Activated CD8-positive, alpha-beta T cell treated with anti-CD3 and anti-CD28 coated beads for 36 hours (primary cell): ENCODE measurements at regions of chr2 and their contacts with region 1.

Region 1: GRCh38 chr2:53767405-53768241 is at the start of gene CHAC2:
- DNase-seq: peak; percentile 94
- ATAC-seq: peak; percentile 95
- H3K4me3 Mint-ChIP-seq: peak within 1 kb of the TSS; percentile 96
- H3K27ac Mint-ChIP-seq: peak within 1 kb of the TSS; percentile 97
- H3K4me1 Mint-ChIP-seq: peaks cover 31% of the 10 kb centered on the region
- H3K27me3 Mint-ChIP-seq: no peaks in the 10 kb centered on the region
- CTCF ChIP-seq: peak; percentile 26
- total RNA-seq, gene CHAC2: 19.8 to 20.4 TPM

Region 2: DNA sequence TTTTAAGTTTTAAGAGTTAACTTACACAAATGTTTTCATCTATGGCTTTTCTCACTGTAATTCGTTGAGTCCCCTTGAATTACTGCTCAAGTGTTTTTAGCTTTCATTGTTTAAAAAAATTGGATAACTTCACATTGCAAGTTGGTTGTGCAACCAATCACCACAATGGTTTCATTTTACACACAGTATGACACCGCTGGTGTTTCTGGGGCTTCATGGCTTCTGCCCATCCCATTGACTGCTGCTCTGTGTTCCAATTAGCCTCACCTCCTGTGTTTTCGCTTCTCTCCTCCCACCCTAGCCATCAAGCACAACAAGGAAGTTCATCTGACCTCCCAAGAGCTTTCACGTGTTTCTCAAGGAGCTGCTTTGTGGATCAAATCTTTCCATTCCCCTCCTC is 199.2 kb before region 1 on chr2:
- CTCF ChIA-PET with region 1: no interaction called
- POLR2A ChIA-PET with region 1: no interaction called
- intact Hi-C with region 1: no loop called
- DNase-seq: no peak
- ATAC-seq: no peak
- H3K4me3 Mint-ChIP-seq: no peak overlapping the region
- H3K27ac Mint-ChIP-seq: no peak overlapping the region
- H3K4me1 Mint-ChIP-seq: no peaks in the 10 kb centered on the region
- H3K27me3 Mint-ChIP-seq: peaks cover 3% of the 10 kb centered on the region
- CTCF ChIP-seq: no peak

Region 3: GRCh38 chr2:53755026-53755630 is 12.5 kb before region 1 on chr2:
- CTCF ChIA-PET with region 1: interaction called, 4 read pairs
- POLR2A ChIA-PET with region 1: interaction called, 15 read pairs
- intact Hi-C with region 1: no loop called
- DNase-seq: no peak
- ATAC-seq: no peak
- H3K4me3 Mint-ChIP-seq: no peak overlapping the region
- H3K27ac Mint-ChIP-seq: no peak overlapping the region
- H3K4me1 Mint-ChIP-seq: peaks cover 25% of the 10 kb centered on the region
- H3K27me3 Mint-ChIP-seq: no peaks in the 10 kb centered on the region
- CTCF ChIP-seq: no peak

Region 4: DNA sequence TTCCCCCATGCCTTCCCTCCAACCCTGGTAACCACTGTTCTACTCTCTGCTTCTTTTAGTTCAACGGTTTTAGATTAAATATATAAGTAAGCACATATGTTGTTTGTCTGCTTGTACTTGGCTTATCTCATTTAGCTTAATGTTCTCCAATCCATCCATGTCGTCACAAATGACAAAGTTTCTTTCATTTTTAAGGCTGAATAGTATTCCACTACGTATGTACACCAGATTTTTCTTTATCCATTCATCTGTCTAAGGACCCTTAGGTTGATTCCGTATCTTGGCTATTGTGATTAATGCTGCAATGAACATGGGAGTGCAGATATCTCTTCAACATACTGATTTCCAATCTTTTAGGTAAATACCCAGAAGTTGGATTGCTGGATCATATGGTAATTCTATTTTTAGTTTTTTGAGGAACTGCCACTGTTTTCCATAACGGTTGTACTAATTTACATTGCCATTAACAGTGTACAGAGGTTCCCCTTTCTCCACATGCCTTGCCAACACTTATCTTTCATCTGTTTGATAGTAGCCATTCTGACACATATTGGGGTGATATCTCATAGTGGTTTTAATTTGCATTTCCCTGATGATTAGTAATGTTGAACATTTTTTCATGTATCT is 11.0 kb after region 1 on chr2:
- CTCF ChIA-PET with region 1: interaction called, 6 read pairs
- POLR2A ChIA-PET with region 1: interaction called, 17 read pairs
- intact Hi-C with region 1: no loop called
- DNase-seq: no peak
- ATAC-seq: no peak
- H3K4me3 Mint-ChIP-seq: no peak overlapping the region
- H3K27ac Mint-ChIP-seq: peak overlapping the region; percentile 9
- H3K4me1 Mint-ChIP-seq: peaks cover 36% of the 10 kb centered on the region
- H3K27me3 Mint-ChIP-seq: no peaks in the 10 kb centered on the region
- CTCF ChIP-seq: no peak

Region 5: DNA sequence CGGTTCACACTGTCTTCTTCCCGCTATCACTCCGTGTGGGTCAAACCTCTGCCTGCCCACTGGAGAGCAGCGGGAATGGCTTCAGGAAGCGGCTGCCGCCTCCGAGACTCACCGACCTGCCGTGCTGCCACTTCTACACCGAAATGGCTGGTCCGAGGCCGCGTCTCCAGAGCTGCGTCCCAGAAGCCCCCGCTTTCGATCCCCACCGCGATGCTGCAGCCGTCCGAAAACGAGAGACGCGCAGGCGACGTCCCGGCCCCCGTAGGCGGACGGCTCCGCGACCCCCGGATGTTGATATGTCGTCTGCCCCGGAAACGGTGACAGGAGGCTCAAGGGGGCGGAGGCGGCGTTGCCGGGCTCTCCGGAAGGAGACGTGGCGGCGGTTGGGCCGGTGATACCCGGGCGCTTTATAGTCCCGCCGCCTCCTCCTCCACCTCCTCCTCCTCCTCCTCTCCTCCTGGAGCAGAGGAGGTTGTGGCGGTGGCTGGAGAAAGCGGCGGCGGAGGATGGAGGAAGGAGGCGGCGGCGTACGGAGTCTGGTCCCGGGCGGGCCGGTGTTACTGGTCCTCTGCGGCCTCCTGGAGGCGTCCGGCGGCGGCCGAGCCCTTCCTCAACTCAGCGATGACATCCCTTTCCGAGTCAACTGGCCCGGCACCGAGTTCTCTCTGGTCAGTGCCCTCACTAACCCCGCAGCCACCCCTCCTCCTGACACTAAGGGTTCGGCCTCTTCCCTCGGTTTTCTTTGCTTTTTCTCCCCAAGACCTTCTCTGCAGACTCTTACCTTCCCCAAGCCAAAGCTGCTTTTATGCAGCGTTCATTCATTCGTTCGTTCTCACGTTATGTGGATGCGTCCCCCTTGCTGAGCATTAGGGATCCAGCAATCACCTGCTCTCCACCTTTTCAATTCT is 19.3 kb after region 1 on chr2 and contains the starts of genes ASB3 and ERLEC1:
- CTCF ChIA-PET with region 1: interaction called, 16 read pairs
- POLR2A ChIA-PET with region 1: interaction called, 59 read pairs
- intact Hi-C with region 1: loop called (anchors 1 kb)
- DNase-seq: peak; percentile 95
- ATAC-seq: peak; percentile 92
- H3K4me3 Mint-ChIP-seq: peak within 1 kb of the TSS; percentile 92
- H3K27ac Mint-ChIP-seq: peak within 1 kb of the TSS; percentile 92
- H3K4me1 Mint-ChIP-seq: peaks cover 47% of the 10 kb centered on the region
- H3K27me3 Mint-ChIP-seq: no peaks in the 10 kb centered on the region
- CTCF ChIP-seq: no peak
- total RNA-seq, gene ASB3: 22.9 to 25.3 TPM
- total RNA-seq, gene ERLEC1: 15.6 to 19.2 TPM